Activated CD4-positive, alpha-beta memory T cell treated with anti-CD3 and anti-CD28 coated beads for 36 hours (primary cell): ENCODE measurements at regions of chr9 and their contacts with region 1.

Region 1: DNA sequence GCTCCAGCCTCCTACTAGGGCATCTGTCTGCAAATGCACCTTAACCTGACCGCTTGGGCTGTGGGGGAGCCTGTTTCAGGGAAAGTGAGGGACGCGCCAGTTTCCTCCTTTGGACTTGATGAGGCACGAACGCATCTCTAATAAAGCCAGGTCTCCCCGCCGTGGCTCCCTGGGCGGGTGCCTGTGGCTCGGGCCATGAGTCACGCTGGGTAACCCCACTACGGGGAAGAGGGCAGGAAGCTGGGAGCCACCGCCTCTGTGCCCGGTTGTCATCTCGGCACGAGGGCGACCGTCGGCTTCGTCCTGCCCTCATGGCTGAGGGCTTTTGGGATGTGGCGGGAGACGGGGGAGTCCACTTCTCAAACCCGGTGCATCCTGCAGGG is 12.1 kb downstream of the NOTCH1 start:
- DNase-seq: peak; percentile 91
- H3K4me3 Mint-ChIP-seq: peak overlapping the region; percentile 39
- H3K27ac Mint-ChIP-seq: peak overlapping the region; percentile 92
- H3K4me1 Mint-ChIP-seq: peaks cover 50% of the 10 kb centered on the region
- H3K27me3 Mint-ChIP-seq: no peaks in the 10 kb centered on the region

Region 2: DNA sequence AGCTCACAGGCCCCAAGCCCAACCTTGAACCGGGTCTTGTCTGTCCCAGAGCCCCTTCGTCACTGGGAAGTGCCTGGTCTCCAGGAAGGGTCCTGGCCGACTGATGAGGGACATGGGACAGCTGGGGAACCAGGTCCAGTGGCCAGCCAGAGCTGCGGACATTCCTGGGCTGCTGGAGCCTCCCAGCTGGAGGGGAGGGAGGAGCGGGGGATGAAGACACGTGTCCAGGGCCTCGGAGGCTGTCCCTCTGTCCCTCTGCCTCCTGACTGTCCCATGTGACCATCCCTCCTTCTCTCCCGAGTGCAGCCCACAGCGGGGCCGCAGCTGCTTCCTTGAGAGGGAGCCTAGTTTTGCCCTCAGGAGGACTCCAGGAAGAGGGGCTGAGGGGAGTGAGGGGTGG is 530.9 kb before region 1 on chr9:
- CTCF ChIA-PET with region 1: no interaction called
- POLR2A ChIA-PET with region 1: no interaction called
- intact Hi-C with region 1: no loop called
- DNase-seq: no peak
- H3K4me3 Mint-ChIP-seq: no peak overlapping the region
- H3K27ac Mint-ChIP-seq: no peak overlapping the region
- H3K4me1 Mint-ChIP-seq: no peaks in the 10 kb centered on the region
- H3K27me3 Mint-ChIP-seq: no peaks in the 10 kb centered on the region

Region 3: GRCh38 chr9:136545966-136546698 is 12.4 kb after region 1 on chr9 and contains the start of gene NOTCH1:
- CTCF ChIA-PET with region 1: no interaction called
- POLR2A ChIA-PET with region 1: interaction called, 10 read pairs
- intact Hi-C with region 1: loop called (anchors 2 kb)
- DNase-seq: peak; percentile 93
- H3K4me3 Mint-ChIP-seq: peak within 1 kb of the TSS; percentile 96
- H3K27ac Mint-ChIP-seq: peak within 1 kb of the TSS; percentile 94
- H3K4me1 Mint-ChIP-seq: peaks cover 45% of the 10 kb centered on the region
- H3K27me3 Mint-ChIP-seq: no peaks in the 10 kb centered on the region
- total RNA-seq, gene NOTCH1: 67.0 to 68.3 TPM

Region 4: DNA sequence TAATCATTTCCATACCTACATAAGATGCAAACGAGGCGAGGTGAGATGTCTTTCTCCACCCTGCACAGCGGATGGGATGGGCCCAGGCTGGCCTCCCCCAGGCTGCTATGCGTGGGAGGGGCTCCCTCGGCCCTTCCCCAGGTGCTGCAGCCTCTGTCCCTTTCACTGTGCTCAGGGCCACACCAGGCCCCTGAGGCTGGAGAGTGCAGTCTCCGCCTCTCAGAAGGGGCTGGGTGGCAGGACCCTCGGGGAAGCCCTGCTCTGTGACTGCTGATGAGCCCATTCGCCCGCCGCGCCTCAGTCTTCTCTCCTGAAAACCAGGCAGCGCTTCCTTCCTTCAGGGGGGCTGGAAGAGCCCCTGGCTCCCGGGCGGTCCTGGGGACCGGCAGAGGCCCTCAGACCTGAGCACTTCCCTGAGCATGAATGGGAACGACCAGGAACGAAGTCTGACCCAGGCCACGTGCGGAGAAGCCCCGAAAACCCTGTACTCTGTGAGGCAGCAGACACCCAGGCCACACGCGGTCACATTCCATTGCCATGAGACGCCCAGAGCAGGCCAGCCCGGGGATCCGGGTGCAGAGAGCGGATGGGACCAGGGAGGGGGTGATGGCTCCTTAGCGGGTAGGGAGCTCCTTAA is 34.0 kb after region 1 on chr9:
- CTCF ChIA-PET with region 1: no interaction called
- POLR2A ChIA-PET with region 1: no interaction called
- intact Hi-C with region 1: no loop called
- DNase-seq: no peak
- H3K4me3 Mint-ChIP-seq: no peak overlapping the region
- H3K27ac Mint-ChIP-seq: no peak overlapping the region
- H3K4me1 Mint-ChIP-seq: no peaks in the 10 kb centered on the region
- H3K27me3 Mint-ChIP-seq: no peaks in the 10 kb centered on the region